ENCODE measurements at regions of chr1 and their contacts with region 1.

Region 1: GRCh38 chr1:202192770-202193613 is 607 bp upstream of the LGR6 start:
- DNase-seq: peak; percentile 72
- H3K4me3 Mint-ChIP-seq: no peak overlapping the region
- H3K27ac Mint-ChIP-seq: no peak overlapping the region
- H3K4me1 Mint-ChIP-seq: peaks cover under 1% of the 10 kb centered on the region
- H3K27me3 Mint-ChIP-seq: peaks cover 38% of the 10 kb centered on the region
- CTCF ChIP-seq: peak; percentile 99

Region 2: GRCh38 chr1:201709564-201710295 is 483.3 kb before region 1 on chr1:
- CTCF ChIA-PET with region 1: no interaction called
- POLR2A ChIA-PET with region 1: no interaction called
- intact Hi-C with region 1: no loop called
- DNase-seq: peak; percentile 87
- H3K4me3 Mint-ChIP-seq: no peak overlapping the region
- H3K27ac Mint-ChIP-seq: no peak overlapping the region
- H3K4me1 Mint-ChIP-seq: peaks cover 52% of the 10 kb centered on the region
- H3K27me3 Mint-ChIP-seq: no peaks in the 10 kb centered on the region
- CTCF ChIP-seq: peak; percentile 100

Region 3: GRCh38 chr1:202164271-202165037 is 28.5 kb before region 1 on chr1:
- CTCF ChIA-PET with region 1: interaction called, 18 read pairs
- POLR2A ChIA-PET with region 1: no interaction called
- intact Hi-C with region 1: no loop called
- DNase-seq: no peak
- H3K4me3 Mint-ChIP-seq: no peak overlapping the region
- H3K27ac Mint-ChIP-seq: no peak overlapping the region
- H3K4me1 Mint-ChIP-seq: peaks cover 7% of the 10 kb centered on the region
- H3K27me3 Mint-ChIP-seq: peaks cover 11% of the 10 kb centered on the region
- CTCF ChIP-seq: no peak

Region 4: DNA sequence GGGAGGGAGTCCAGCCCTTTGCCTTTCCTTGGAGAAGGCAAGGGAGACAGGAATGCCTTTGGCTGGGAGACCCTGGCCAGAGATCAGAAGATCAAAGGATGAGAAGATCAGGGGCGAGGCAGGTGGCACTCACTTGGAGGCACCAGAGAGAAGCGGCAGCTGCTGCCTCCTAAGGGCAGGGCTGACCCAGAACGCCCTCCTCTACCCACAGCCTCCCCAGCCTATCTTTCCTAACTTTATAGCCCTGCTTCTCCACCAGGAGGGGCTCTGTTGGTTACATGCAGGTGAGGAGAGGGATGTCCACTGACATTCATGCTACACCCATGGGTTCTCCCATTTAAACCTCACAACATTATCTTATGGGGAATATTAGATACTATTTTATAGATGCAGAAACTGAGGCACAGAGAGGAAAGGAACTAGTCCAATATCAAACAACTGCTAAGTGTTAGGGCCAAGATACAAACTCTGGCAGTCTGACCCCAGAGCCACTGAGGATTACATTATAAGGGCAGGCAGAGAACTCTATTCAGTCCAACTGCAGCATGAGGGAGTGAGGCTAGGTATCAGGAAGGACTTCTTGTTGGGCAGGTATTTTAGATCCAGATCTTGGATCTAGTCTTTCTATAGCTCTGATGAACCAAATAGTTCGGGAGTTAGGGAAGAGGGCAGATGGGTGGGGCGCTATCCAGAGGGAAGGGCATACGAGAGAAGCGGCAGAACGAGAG is 20.5 kb after region 1 on chr1:
- CTCF ChIA-PET with region 1: interaction called, 17 read pairs
- POLR2A ChIA-PET with region 1: no interaction called
- intact Hi-C with region 1: no loop called
- DNase-seq: peak; percentile 59
- H3K4me3 Mint-ChIP-seq: peak overlapping the region; percentile 58
- H3K27ac Mint-ChIP-seq: peak overlapping the region; percentile 3
- H3K4me1 Mint-ChIP-seq: peaks cover 16% of the 10 kb centered on the region
- H3K27me3 Mint-ChIP-seq: peaks cover 67% of the 10 kb centered on the region
- CTCF ChIP-seq: peak; percentile 34

Region 5: DNA sequence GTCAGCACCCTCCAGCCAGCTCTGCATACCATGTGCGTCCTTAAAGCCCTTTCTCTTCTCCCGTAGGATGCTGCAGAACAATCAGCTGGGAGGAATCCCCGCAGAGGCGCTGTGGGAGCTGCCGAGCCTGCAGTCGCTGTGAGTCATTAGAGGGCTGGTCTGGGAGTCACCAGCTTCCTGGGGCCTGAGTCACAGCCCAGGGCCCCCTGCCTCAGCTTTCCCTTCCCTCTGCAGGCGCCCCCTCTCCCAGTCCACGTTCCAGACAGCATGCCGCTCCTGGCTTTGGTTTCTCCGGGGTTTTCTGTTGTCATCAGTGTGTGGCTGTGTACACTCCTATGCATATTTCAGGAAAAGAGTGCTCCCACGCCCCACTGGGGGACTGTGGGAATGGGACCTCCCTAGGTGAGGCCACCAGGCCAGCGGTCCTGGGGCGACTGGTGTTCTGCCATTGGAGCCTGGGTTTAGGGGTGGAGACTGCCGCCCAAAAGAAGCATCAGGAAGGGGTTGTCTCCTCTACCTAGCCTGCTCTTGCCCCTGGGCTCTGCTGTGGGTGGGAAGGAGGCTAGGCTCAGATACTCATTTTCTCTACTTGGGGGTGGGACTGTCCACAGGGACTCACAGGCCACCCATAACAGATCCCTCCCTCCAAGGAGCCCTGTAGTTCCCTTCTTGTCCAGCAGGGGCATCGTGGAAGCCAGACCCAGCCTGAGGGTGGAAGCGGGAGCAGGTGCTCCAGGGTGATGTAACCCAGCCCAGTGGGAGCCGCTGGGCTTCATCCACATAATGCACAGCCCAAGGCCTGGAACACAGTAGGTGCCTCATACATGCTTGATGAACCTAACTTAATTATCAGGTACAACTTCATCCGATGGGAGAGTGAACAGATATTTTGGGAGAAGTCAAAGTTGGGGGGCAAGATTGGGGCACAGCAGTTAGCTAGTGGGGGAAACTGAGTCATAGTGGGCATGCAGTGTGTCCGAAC is 43.2 kb after region 1 on chr1:
- CTCF ChIA-PET with region 1: interaction called, 23 read pairs
- POLR2A ChIA-PET with region 1: interaction called, 3 read pairs
- intact Hi-C with region 1: loop called (anchors 1 kb)
- DNase-seq: peak; percentile 97
- H3K4me3 Mint-ChIP-seq: peak overlapping the region; percentile 61
- H3K27ac Mint-ChIP-seq: peak overlapping the region; percentile 49
- H3K4me1 Mint-ChIP-seq: peaks cover 35% of the 10 kb centered on the region
- H3K27me3 Mint-ChIP-seq: no peaks in the 10 kb centered on the region
- CTCF ChIP-seq: peak; percentile 100

Region 6: GRCh38 chr1:202283379-202283844 is 90.4 kb after region 1 on chr1:
- CTCF ChIA-PET with region 1: interaction called, 47 read pairs
- POLR2A ChIA-PET with region 1: interaction called, 5 read pairs
- intact Hi-C with region 1: no loop called
- DNase-seq: peak; percentile 100
- H3K4me3 Mint-ChIP-seq: peak overlapping the region; percentile 5
- H3K27ac Mint-ChIP-seq: peak overlapping the region; percentile 82
- H3K4me1 Mint-ChIP-seq: peaks cover 56% of the 10 kb centered on the region
- H3K27me3 Mint-ChIP-seq: peaks cover 14% of the 10 kb centered on the region
- CTCF ChIP-seq: no peak

Region 7: GRCh38 chr1:202315576-202316168 is 122.7 kb after region 1 on chr1:
- CTCF ChIA-PET with region 1: interaction called, 954 read pairs
- POLR2A ChIA-PET with region 1: interaction called, 11 read pairs
- intact Hi-C with region 1: loop called (anchors 1 kb)
- DNase-seq: peak; percentile 92
- H3K4me3 Mint-ChIP-seq: no peak overlapping the region
- H3K27ac Mint-ChIP-seq: no peak overlapping the region
- H3K4me1 Mint-ChIP-seq: no peaks in the 10 kb centered on the region
- H3K27me3 Mint-ChIP-seq: no peaks in the 10 kb centered on the region
- CTCF ChIP-seq: peak; percentile 99